ENCODE measurements at regions of chrX and their contacts with region 1.

Region 1: GRCh38 chrX:71181910-71182799 is 37.5 kb downstream of the NLGN3 start:
- DNase-seq: peak; percentile 81 to 91 (median 84)
- H3K4me3 ChIP-seq: peak overlapping the region; percentile 67 to 81
- H3K4me3 Mint-ChIP-seq: peak overlapping the region; percentile 91 to 98 (median 94)
- H3K27ac ChIP-seq: peak overlapping the region; percentile 85
- H3K27ac Mint-ChIP-seq: peak overlapping the region; percentile 94 to 99 (median 98)
- H3K4me1 ChIP-seq: peaks cover 8% of the 10 kb centered on the region
- H3K4me1 Mint-ChIP-seq: peaks cover 5 to 27% (median 19%) of the 10 kb centered on the region in 4 donors
- H3K27me3 ChIP-seq: no peaks in the 10 kb centered on the region
- H3K27me3 Mint-ChIP-seq: no peaks in the 10 kb centered on the region

Region 2: GRCh38 chrX:70769659-70770232 is 412.4 kb before region 1 on chrX:
- CTCF ChIA-PET with region 1: interaction called, 5 read pairs
- POLR2A ChIA-PET with region 1: no interaction called
- intact Hi-C with region 1: loop called (anchors 1 kb)
- DNase-seq: peak in 2 of 5 donors; percentile 9 to 14
- H3K4me3 ChIP-seq: no peak overlapping the region
- H3K4me3 Mint-ChIP-seq: no peak overlapping the region
- H3K27ac ChIP-seq: no peak overlapping the region
- H3K27ac Mint-ChIP-seq: no peak overlapping the region
- H3K4me1 ChIP-seq: no peaks in the 10 kb centered on the region
- H3K4me1 Mint-ChIP-seq: no peaks in the 10 kb centered on the region
- H3K27me3 ChIP-seq: no peaks in the 10 kb centered on the region
- H3K27me3 Mint-ChIP-seq: no peaks in the 10 kb centered on the region

Region 3: GRCh38 chrX:70998411-70999027 is 183.6 kb before region 1 on chrX:
- CTCF ChIA-PET with region 1: interaction called, 6 read pairs
- POLR2A ChIA-PET with region 1: no interaction called
- intact Hi-C with region 1: loop called (anchors 2 kb)
- DNase-seq: peak in 2 of 5 donors; percentile 5 to 11
- H3K4me3 ChIP-seq: no peak overlapping the region
- H3K4me3 Mint-ChIP-seq: no peak overlapping the region
- H3K27ac ChIP-seq: no peak overlapping the region
- H3K27ac Mint-ChIP-seq: peak overlapping the region in 1 of 7 donors; percentile 58
- H3K4me1 ChIP-seq: no peaks in the 10 kb centered on the region
- H3K4me1 Mint-ChIP-seq: peaks cover 0 to 5% (median 2%) of the 10 kb centered on the region in 4 donors
- H3K27me3 ChIP-seq: no peaks in the 10 kb centered on the region
- H3K27me3 Mint-ChIP-seq: no peaks in the 10 kb centered on the region

Region 4: GRCh38 chrX:71095543-71095911 is 86.6 kb before region 1 on chrX and contains the start of gene FOXO4:
- CTCF ChIA-PET with region 1: interaction called, 11 read pairs
- POLR2A ChIA-PET with region 1: interaction called, 12 read pairs
- intact Hi-C with region 1: loop called (anchors 1 kb)
- DNase-seq: peak; percentile 85 to 94 (median 89)
- H3K4me3 ChIP-seq: peak within 1 kb of the TSS; percentile 36 to 66
- H3K4me3 Mint-ChIP-seq: peak within 1 kb of the TSS; percentile 90 to 99 (median 97)
- H3K27ac ChIP-seq: peak within 1 kb of the TSS; percentile 72
- H3K27ac Mint-ChIP-seq: peak within 1 kb of the TSS; percentile 89 to 99 (median 97)
- H3K4me1 ChIP-seq: peaks cover 34% of the 10 kb centered on the region
- H3K4me1 Mint-ChIP-seq: peaks cover 22 to 44% (median 35%) of the 10 kb centered on the region in 4 donors
- H3K27me3 ChIP-seq: no peaks in the 10 kb centered on the region
- H3K27me3 Mint-ChIP-seq: no peaks in the 10 kb centered on the region
- total RNA-seq, gene FOXO4: 41.9 to 42.9 TPM

Region 5: GRCh38 chrX:71111141-71111843 is 70.9 kb before region 1 on chrX and contains the start of gene IL2RG:
- CTCF ChIA-PET with region 1: interaction called, 3 read pairs
- POLR2A ChIA-PET with region 1: interaction called, 15 read pairs
- intact Hi-C with region 1: loop called (anchors 5 kb)
- DNase-seq: peak; percentile 89 to 95 (median 93)
- H3K4me3 ChIP-seq: peak within 1 kb of the TSS; percentile 81 to 93
- H3K4me3 Mint-ChIP-seq: peak within 1 kb of the TSS; percentile 90 to 99 (median 95)
- H3K27ac ChIP-seq: peak within 1 kb of the TSS; percentile 96
- H3K27ac Mint-ChIP-seq: peak within 1 kb of the TSS; percentile 97 to 99 (median 99)
- H3K4me1 ChIP-seq: peaks cover 46% of the 10 kb centered on the region
- H3K4me1 Mint-ChIP-seq: peaks cover 24 to 69% (median 53%) of the 10 kb centered on the region in 4 donors
- H3K27me3 ChIP-seq: no peaks in the 10 kb centered on the region
- H3K27me3 Mint-ChIP-seq: no peaks in the 10 kb centered on the region
- total RNA-seq, gene IL2RG: 378 to 379 TPM

Region 6: DNA sequence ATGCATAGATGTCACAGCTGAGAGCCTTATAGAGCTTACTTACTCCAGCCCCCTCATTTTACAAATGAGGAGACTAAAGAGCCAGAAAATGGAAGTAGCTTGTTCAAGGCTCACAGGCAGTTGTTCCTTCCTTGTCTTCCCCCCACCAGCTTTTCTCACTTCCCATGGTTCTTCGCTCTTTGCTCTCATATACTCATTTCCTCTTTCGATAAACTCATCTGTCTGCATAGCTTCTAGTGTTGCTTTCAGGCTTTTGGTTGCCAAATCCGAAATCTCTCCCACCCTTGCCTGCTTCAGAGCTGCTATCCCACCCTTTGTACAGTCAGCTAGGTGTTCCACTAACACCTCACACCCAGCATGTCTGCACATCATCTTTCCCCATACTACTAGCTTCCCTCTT is 15.9 kb after region 1 on chrX:
- CTCF ChIA-PET with region 1: interaction called, 8 read pairs
- POLR2A ChIA-PET with region 1: interaction called, 67 read pairs
- intact Hi-C with region 1: loop called (anchors 2 kb)
- DNase-seq: peak in 2 of 5 donors; percentile 15 to 23
- H3K4me3 ChIP-seq: peak overlapping the region; percentile 29 to 60
- H3K4me3 Mint-ChIP-seq: peak overlapping the region; percentile 85 to 96 (median 90)
- H3K27ac ChIP-seq: peak overlapping the region; percentile 61
- H3K27ac Mint-ChIP-seq: peak overlapping the region; percentile 86 to 95 (median 89)
- H3K4me1 ChIP-seq: peaks cover 8% of the 10 kb centered on the region
- H3K4me1 Mint-ChIP-seq: peaks cover 11 to 34% (median 21%) of the 10 kb centered on the region in 4 donors
- H3K27me3 ChIP-seq: no peaks in the 10 kb centered on the region
- H3K27me3 Mint-ChIP-seq: no peaks in the 10 kb centered on the region

Region 7: DNA sequence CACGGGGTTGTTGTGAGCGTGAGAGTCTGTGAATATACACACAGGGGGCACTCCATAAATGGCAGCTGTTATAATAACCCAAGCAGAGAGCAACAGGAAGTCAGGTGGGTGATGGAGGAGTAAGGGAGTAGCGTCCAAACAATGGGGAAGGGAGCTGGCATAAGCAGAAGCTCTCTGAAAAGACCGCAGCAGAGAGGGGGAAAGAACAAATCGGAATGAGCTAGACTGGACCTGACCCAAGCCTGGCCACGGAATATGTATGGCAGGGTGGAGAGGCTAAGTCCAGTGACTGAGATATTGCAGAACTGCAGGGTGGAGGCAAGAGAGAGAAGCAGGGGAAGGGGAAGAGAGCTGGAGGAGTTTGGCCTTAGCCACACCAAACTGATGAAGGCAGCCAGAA is 34.3 kb after region 1 on chrX:
- CTCF ChIA-PET with region 1: no interaction called
- POLR2A ChIA-PET with region 1: no interaction called
- intact Hi-C with region 1: no loop called
- DNase-seq: no peak
- H3K4me3 ChIP-seq: no peak overlapping the region
- H3K4me3 Mint-ChIP-seq: no peak overlapping the region
- H3K27ac ChIP-seq: no peak overlapping the region
- H3K27ac Mint-ChIP-seq: no peak overlapping the region
- H3K4me1 ChIP-seq: no peaks in the 10 kb centered on the region
- H3K4me1 Mint-ChIP-seq: no peaks in the 10 kb centered on the region
- H3K27me3 ChIP-seq: no peaks in the 10 kb centered on the region
- H3K27me3 Mint-ChIP-seq: peaks cover 0 to 2% of the 10 kb centered on the region in 2 donors

Region 8: DNA sequence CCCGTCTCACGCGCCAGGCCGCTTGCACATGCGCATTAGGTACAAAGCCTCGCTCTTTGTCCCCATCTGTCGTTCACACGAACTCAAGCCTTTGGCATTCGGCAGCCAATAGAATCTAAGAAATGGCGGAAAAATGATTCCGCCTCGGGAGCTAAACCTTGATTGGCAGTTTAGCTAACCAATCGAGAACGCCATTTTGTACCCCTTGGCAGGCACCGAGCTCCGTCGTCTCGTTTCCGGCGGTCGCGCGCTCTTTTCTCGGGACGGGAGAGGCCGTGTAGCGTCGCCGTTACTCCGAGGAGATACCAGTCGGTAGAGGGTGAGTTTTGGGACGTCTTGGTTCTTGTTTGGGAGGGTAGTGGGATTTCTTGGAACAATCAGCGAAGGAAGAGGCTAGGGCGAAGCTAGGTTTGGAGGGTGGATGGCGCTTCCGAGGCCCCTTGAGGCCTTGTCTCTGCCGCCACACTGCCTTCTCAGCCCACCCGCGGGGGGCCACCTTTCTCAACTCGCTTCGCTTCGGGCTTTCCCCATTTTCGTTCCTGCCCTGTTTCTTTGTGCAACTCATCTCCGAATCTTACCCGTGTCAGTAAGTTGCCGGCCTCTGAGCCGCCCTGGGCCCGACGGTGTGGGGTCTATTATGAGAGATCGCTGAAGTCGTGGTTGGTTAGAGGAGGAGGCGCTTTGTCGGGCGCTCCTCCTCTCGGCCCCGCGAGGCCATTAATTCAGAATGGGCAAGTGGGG is 101.4 kb after region 1 on chrX and contains the start of gene NONO:
- CTCF ChIA-PET with region 1: interaction called, 7 read pairs
- POLR2A ChIA-PET with region 1: interaction called, 33 read pairs
- intact Hi-C with region 1: loop called (anchors 1 kb)
- DNase-seq: peak; percentile 86 to 95 (median 92)
- H3K4me3 ChIP-seq: peak within 1 kb of the TSS; percentile 62 to 63
- H3K4me3 Mint-ChIP-seq: peak within 1 kb of the TSS; percentile 96 to 100 (median 98)
- H3K27ac ChIP-seq: peak within 1 kb of the TSS; percentile 95
- H3K27ac Mint-ChIP-seq: peak within 1 kb of the TSS; percentile 97 to 100 (median 99)
- H3K4me1 ChIP-seq: peaks cover 34% of the 10 kb centered on the region
- H3K4me1 Mint-ChIP-seq: peaks cover 7 to 42% (median 13%) of the 10 kb centered on the region in 4 donors
- H3K27me3 ChIP-seq: no peaks in the 10 kb centered on the region
- H3K27me3 Mint-ChIP-seq: no peaks in the 10 kb centered on the region
- total RNA-seq, gene NONO: 300 to 314 TPM